Cardiac septum (tissue), 1 donor: ENCODE measurements at regions of chr15 and their contacts with region 1.

Region 1: GRCh38 chr15:89299896-89300295 is 34.7 kb downstream of the POLG start:
- DNase-seq: no peak

Region 2: GRCh38 chr15:89090791-89091626 is 208.9 kb before region 1 on chr15:
- intact Hi-C with region 1: no loop called
- DNase-seq: peak; percentile 91

Region 3: GRCh38 chr15:89206908-89207331 is 93.0 kb before region 1 on chr15:
- intact Hi-C with region 1: loop called (anchors 5 kb)
- DNase-seq: peak; percentile 85